Activated B cell treated with CpG ODN at 0.5 μM for 24 hours (primary cell): ENCODE measurements at regions of chr12 and their contacts with region 1.

Region 1: GRCh38 chr12:66196806-66197205 is 7.8 kb downstream of the IRAK3 start:
- DNase-seq: no peak
- ATAC-seq: peak; percentile 95
- H3K4me3 Mint-ChIP-seq: peak overlapping the region; percentile 52
- H3K27ac Mint-ChIP-seq: peak overlapping the region; percentile 41
- H3K4me1 Mint-ChIP-seq: peaks cover 32% of the 10 kb centered on the region
- H3K27me3 Mint-ChIP-seq: peaks cover 11% of the 10 kb centered on the region
- CTCF ChIP-seq: no peak

Region 2: GRCh38 chr12:66210840-66211239 is 14.0 kb after region 1 on chr12:
- CTCF ChIA-PET with region 1: no interaction called
- POLR2A ChIA-PET with region 1: interaction called, 4 read pairs
- intact Hi-C with region 1: loop called (anchors 2 kb)
- DNase-seq: no peak
- ATAC-seq: no peak
- H3K4me3 Mint-ChIP-seq: no peak overlapping the region
- H3K27ac Mint-ChIP-seq: no peak overlapping the region
- H3K4me1 Mint-ChIP-seq: peaks cover 11% of the 10 kb centered on the region
- H3K27me3 Mint-ChIP-seq: peaks cover 5% of the 10 kb centered on the region
- CTCF ChIP-seq: no peak

Region 3: GRCh38 chr12:66329941-66330340 is 133.1 kb after region 1 on chr12:
- CTCF ChIA-PET with region 1: no interaction called
- POLR2A ChIA-PET with region 1: interaction called, 11 read pairs
- intact Hi-C with region 1: no loop called
- DNase-seq: no peak
- ATAC-seq: no peak
- H3K4me3 Mint-ChIP-seq: no peak overlapping the region
- H3K27ac Mint-ChIP-seq: no peak overlapping the region
- H3K4me1 Mint-ChIP-seq: no peaks in the 10 kb centered on the region
- H3K27me3 Mint-ChIP-seq: no peaks in the 10 kb centered on the region
- CTCF ChIP-seq: no peak